CD4-positive, alpha-beta memory T cell (primary cell): ENCODE measurements at regions of chr19 and their contacts with region 1.

Region 1: DNA sequence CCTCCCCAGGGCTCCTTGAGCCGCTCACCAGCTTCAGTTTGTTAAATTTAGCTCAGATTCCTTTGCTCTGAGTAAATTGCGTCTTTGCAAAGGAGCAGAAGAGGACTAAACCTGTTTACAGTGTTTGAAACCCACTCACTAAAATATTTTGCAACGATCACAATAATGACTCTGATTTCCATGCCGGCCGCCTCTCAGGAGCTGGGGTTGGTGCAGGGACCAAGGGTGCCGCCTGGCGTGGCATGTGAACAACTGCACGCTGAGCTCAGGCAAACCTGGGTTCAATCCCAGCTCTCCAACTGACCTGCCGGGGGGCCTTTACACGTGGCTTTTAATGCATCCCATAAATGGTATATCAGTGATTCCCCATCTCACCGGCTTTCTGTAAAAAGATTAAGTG is 68.7 kb upstream of the CACNA1A start:
- DNase-seq: no peak
- H3K4me3 ChIP-seq: no peak overlapping the region
- H3K4me3 Mint-ChIP-seq: no peak overlapping the region
- H3K27ac ChIP-seq: no peak overlapping the region
- H3K27ac Mint-ChIP-seq: no peak overlapping the region
- H3K4me1 ChIP-seq: no peaks in the 10 kb centered on the region
- H3K4me1 Mint-ChIP-seq: no peaks in the 10 kb centered on the region
- H3K27me3 ChIP-seq: no peaks in the 10 kb centered on the region
- H3K27me3 Mint-ChIP-seq: peaks cover 21 to 27% of the 10 kb centered on the region in 2 donors

Region 2: DNA sequence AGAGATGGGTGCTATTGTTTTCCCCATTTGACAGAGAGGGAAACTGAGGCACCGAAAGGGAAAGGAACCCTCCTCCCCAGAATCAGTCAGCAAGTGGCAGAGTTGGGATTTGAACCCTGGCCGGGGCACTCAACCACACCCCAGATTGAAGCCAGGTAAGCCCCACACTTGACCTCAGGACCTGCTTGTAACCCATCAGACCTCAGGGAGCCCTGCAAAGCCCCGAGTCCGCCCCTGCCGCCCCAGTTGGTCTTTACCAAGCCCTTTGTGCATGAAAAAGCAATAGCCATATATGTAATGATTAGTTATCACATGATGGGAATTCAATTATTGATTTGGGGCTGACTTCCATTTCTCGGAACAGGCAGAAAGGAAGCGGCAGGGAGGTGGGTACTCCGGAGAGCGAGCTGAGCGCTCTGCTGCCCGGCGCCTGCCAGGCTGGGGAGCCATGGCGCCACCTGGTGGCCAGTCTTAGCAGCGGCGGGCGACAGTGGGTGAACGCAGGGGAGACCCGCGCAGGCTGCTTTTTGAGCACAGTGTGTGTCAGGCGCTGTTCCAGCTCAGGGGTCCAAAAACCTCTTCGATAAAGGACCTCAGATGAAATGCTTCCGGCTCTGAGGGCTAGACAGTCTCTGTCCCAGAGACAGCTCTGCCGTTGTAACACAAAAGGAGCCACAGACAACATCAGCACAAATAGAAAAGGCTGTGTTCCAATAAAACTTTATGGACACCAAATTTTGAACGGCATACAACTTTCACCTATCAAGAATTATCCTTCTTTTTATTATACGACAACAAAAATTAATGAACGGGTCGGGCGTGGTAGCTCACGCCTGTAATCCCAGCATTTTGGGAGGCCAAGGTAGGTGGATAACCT is 14.3 kb after region 1 on chr19:
- CTCF ChIA-PET with region 1: interaction called, 37 read pairs
- POLR2A ChIA-PET with region 1: no interaction called
- intact Hi-C with region 1: no loop called
- DNase-seq: peak; percentile 63 to 79 (median 77)
- H3K4me3 ChIP-seq: no peak overlapping the region
- H3K4me3 Mint-ChIP-seq: peak overlapping the region in 1 of 8 donors; percentile 20
- H3K27ac ChIP-seq: no peak overlapping the region
- H3K27ac Mint-ChIP-seq: no peak overlapping the region
- H3K4me1 ChIP-seq: peaks cover 7% of the 10 kb centered on the region
- H3K4me1 Mint-ChIP-seq: no peaks in the 10 kb centered on the region
- H3K27me3 ChIP-seq: no peaks in the 10 kb centered on the region
- H3K27me3 Mint-ChIP-seq: peaks cover 2 to 6% of the 10 kb centered on the region in 2 donors

Region 3: DNA sequence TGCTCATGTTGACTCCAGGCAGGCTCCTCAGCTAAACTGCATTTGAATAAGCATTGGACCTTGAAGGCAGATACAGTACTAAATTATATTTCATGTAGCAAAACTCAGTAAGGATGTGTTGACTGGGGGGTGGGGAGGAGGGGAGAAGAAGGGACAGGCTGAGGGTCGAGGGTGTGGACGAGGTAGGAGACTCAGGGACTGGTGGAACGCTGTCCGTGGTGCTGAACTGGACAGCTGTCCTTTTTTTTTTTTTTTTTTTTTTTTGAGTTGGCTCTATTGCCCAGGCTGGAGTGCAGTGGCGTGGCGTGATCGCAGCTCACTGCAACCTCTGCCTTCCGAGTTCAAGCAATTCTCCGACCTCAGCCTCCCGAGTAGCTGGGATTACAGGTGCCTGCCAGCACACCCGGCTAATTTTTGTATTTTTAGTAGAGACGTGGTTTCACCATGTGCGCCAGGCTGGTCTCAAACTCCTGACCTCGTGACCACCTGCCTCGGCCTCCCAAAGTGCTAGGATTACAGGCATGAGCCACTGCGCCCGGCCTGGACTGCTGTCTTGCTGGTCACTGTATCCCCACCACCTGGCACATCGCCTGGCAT is 1441.1 kb after region 1 on chr19:
- CTCF ChIA-PET with region 1: no interaction called
- POLR2A ChIA-PET with region 1: no interaction called
- intact Hi-C with region 1: no loop called
- DNase-seq: no peak
- H3K4me3 ChIP-seq: no peak overlapping the region
- H3K4me3 Mint-ChIP-seq: no peak overlapping the region
- H3K27ac ChIP-seq: no peak overlapping the region
- H3K27ac Mint-ChIP-seq: no peak overlapping the region
- H3K4me1 ChIP-seq: no peaks in the 10 kb centered on the region
- H3K4me1 Mint-ChIP-seq: no peaks in the 10 kb centered on the region
- H3K27me3 ChIP-seq: no peaks in the 10 kb centered on the region
- H3K27me3 Mint-ChIP-seq: peaks cover 30 to 31% of the 10 kb centered on the region in 2 donors